Right lobe of liver (tissue), 6 donors: ENCODE measurements at regions of chr5 and their contacts with region 1.

Region 1: GRCh38 chr5:154603978-154604679 is 126.1 kb upstream of the HAND1 start:
- DNase-seq: no peak
- ATAC-seq: no peak
- H3K4me3 ChIP-seq: no peak overlapping the region
- H3K27ac ChIP-seq: no peak overlapping the region
- H3K4me1 ChIP-seq: no peaks in the 10 kb centered on the region
- H3K27me3 ChIP-seq: no peaks in the 10 kb centered on the region
- CTCF ChIP-seq: no peak
- POLR2A ChIP-seq: no peak

Region 2: DNA sequence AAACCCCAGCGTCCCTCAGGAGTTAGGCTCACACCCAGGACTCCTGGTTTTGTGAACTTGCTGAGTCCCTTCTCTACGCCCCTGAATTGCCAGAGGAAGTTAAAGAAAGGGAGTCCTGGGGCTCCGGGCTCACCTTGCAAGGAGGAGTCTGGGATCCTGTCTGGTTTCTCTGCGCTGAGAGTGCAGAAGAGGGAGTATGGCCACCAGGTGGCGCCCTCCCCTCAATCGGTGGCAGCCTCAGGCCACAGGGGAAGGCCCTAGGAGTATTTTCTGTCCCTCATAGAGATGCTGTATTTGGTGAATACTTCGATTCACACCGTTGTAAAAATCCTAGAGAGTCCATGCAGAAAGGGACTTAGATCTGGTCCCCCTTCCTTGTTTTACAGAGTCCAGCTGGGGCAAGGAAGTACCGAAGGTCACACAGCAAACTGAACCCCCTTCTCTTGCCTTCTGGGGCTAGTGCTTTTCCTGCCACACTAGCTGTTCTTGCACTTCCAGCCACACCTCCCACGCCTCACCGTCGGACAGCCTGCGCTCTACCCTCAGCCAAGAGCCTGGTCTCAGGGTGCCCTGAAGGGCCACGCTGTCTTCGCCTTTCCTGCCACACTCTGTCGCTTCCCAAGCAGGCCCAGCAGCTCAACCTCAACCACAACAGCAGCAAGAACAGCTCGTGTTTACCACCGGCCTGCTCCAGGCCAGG is 136.3 kb before region 1 on chr5:
- intact Hi-C with region 1: loop called in 1 of 2 experiments (anchors 10 kb)
- DNase-seq: peak; percentile 75 to 77 (median 76)
- ATAC-seq: peak; percentile 95 to 99 (median 98)
- H3K4me3 ChIP-seq: no peak overlapping the region
- H3K27ac ChIP-seq: no peak overlapping the region
- H3K4me1 ChIP-seq: no peaks in the 10 kb centered on the region
- H3K27me3 ChIP-seq: peaks cover 5 to 9% of the 10 kb centered on the region in 2 donors
- CTCF ChIP-seq: peak; percentile 68 to 97 (median 94)
- POLR2A ChIP-seq: no peak